CD8-positive, alpha-beta T cell (primary cell): ENCODE measurements at regions of chr1 and their contacts with region 1.

Region 1: GRCh38 chr1:246907472-246907871 is 24.3 kb downstream of the AHCTF1 start:
- DNase-seq: peak in 2 of 9 experiments; percentile 49 to 60
- ATAC-seq: no peak
- H3K4me3 ChIP-seq: no peak overlapping the region
- H3K4me3 Mint-ChIP-seq: no peak overlapping the region
- H3K27ac ChIP-seq: no peak overlapping the region
- H3K27ac Mint-ChIP-seq: no peak overlapping the region
- H3K4me1 ChIP-seq: peaks cover 5% of the 10 kb centered on the region
- H3K4me1 Mint-ChIP-seq: peaks cover 18% of the 10 kb centered on the region
- H3K27me3 ChIP-seq: no peaks in the 10 kb centered on the region
- H3K27me3 Mint-ChIP-seq: no peaks in the 10 kb centered on the region
- CTCF ChIP-seq: peak; percentile 21

Region 2: GRCh38 chr1:246860401-246860800 is 47.1 kb before region 1 on chr1:
- CTCF ChIA-PET with region 1: no interaction called
- POLR2A ChIA-PET with region 1: no interaction called
- intact Hi-C with region 1: no loop called
- DNase-seq: no peak
- ATAC-seq: no peak
- H3K4me3 ChIP-seq: no peak overlapping the region
- H3K4me3 Mint-ChIP-seq: no peak overlapping the region
- H3K27ac ChIP-seq: no peak overlapping the region
- H3K27ac Mint-ChIP-seq: no peak overlapping the region
- H3K4me1 ChIP-seq: no peaks in the 10 kb centered on the region
- H3K4me1 Mint-ChIP-seq: no peaks in the 10 kb centered on the region
- H3K27me3 ChIP-seq: no peaks in the 10 kb centered on the region
- H3K27me3 Mint-ChIP-seq: no peaks in the 10 kb centered on the region
- CTCF ChIP-seq: no peak

Region 3: GRCh38 chr1:246923482-246923881 is 16.0 kb after region 1 on chr1:
- CTCF ChIA-PET with region 1: no interaction called
- POLR2A ChIA-PET with region 1: no interaction called
- intact Hi-C with region 1: no loop called
- DNase-seq: peak in 1 of 9 experiments; percentile 11
- ATAC-seq: no peak
- H3K4me3 ChIP-seq: no peak overlapping the region
- H3K4me3 Mint-ChIP-seq: peak overlapping the region; percentile 24
- H3K27ac ChIP-seq: no peak overlapping the region
- H3K27ac Mint-ChIP-seq: no peak overlapping the region
- H3K4me1 ChIP-seq: peaks cover 19% of the 10 kb centered on the region
- H3K4me1 Mint-ChIP-seq: peaks cover 56% of the 10 kb centered on the region
- H3K27me3 ChIP-seq: no peaks in the 10 kb centered on the region
- H3K27me3 Mint-ChIP-seq: no peaks in the 10 kb centered on the region
- CTCF ChIP-seq: no peak

Region 4: GRCh38 chr1:246971090-246971721 is 63.7 kb after region 1 on chr1:
- CTCF ChIA-PET with region 1: interaction called, 3 read pairs
- POLR2A ChIA-PET with region 1: no interaction called
- intact Hi-C with region 1: loop called (anchors 2 to 5 kb)
- DNase-seq: peak in 8 of 9 experiments; percentile 20 to 58 (median 38)
- ATAC-seq: no peak
- H3K4me3 ChIP-seq: no peak overlapping the region
- H3K4me3 Mint-ChIP-seq: no peak overlapping the region
- H3K27ac ChIP-seq: no peak overlapping the region
- H3K27ac Mint-ChIP-seq: no peak overlapping the region
- H3K4me1 ChIP-seq: no peaks in the 10 kb centered on the region
- H3K4me1 Mint-ChIP-seq: no peaks in the 10 kb centered on the region
- H3K27me3 ChIP-seq: no peaks in the 10 kb centered on the region
- H3K27me3 Mint-ChIP-seq: no peaks in the 10 kb centered on the region
- CTCF ChIP-seq: peak; percentile 67

Region 5: DNA sequence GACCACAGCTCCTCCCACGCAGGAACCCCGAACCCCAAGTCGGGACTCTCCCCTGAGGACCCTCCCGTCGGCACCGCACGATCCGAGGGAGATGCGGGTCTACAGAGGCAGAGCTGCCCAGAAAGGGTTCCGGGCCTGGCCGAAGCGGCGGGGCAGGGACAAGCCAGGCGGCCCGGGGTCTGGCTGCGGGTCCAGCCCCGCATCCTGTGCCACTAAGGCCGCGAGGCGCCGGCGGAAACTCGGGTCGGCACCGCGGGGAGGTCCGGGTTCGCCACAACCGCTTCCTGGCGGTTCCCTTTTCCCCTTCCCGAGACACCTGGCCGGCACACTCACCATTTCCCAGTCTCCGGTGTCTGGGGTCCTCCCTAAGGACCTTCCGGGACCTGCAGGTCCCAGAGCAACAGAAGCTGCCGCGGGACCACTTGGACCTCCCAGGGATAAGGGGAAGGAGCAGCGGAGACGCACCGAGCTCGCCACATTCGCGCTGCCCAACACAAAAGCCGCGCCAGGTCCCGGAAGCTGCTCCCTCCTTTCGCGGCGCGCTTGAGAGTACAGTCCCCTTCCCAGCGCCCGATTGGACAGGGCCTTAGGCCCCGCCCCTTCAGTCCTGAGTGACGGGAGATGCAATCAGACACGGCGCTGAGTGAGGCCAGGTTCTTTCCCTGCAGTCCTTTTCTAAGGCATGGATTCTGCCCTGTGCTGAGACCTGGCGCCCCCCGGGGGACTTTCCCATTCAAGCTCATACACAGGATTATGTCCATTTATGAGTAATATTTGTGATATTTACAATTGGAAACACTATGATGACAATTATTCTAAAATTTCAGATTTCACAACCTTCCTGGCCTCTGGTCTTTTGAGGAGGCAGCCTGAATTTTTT is 171.0 kb after region 1 on chr1 and contains the start of gene ZNF670:
- CTCF ChIA-PET with region 1: no interaction called
- POLR2A ChIA-PET with region 1: no interaction called
- intact Hi-C with region 1: loop called in 1 of 2 experiments (anchors 10 kb)
- DNase-seq: peak; percentile 57 to 91 (median 82)
- ATAC-seq: peak; percentile 99
- H3K4me3 ChIP-seq: peak within 1 kb of the TSS; percentile 80 to 95
- H3K4me3 Mint-ChIP-seq: peak within 1 kb of the TSS; percentile 89
- H3K27ac ChIP-seq: peak within 1 kb of the TSS; percentile 37 to 51
- H3K27ac Mint-ChIP-seq: peak within 1 kb of the TSS; percentile 78
- H3K4me1 ChIP-seq: peaks cover 7% of the 10 kb centered on the region
- H3K4me1 Mint-ChIP-seq: peaks cover 34% of the 10 kb centered on the region
- H3K27me3 ChIP-seq: no peaks in the 10 kb centered on the region
- H3K27me3 Mint-ChIP-seq: no peaks in the 10 kb centered on the region
- CTCF ChIP-seq: no peak
- total RNA-seq, gene ZNF670: 0.17 TPM in 1 of 2 experiments, not detected in the other

Region 6: DNA sequence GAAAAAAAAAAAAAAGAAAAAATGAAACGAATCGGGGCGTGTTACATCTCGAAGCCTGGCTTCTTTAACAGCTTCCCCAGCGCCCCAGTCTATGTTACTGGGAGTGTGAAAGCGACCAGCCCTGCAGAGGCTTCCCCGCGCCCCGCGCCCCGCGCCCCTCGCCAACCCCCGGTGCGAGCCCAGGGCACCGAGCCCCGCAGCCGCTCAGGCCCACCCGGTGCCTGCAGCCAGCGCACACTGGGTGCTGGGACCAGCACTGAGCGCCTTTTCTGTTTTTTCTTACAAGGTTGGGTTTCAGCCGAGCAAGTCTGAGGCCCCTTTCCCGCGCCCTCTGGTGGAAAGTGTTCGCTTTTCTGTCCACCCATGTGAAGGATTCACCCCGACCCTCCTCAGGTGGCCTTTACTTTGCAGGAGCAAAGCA is 466.3 kb after region 1 on chr1:
- CTCF ChIA-PET with region 1: interaction called, 14 read pairs
- POLR2A ChIA-PET with region 1: no interaction called
- intact Hi-C with region 1: loop called in 1 of 2 experiments (anchors 5 kb)
- DNase-seq: peak; percentile 9 to 74 (median 65)
- ATAC-seq: peak; percentile 86
- H3K4me3 ChIP-seq: peak overlapping the region in 1 of 2 experiments; percentile 37
- H3K4me3 Mint-ChIP-seq: peak overlapping the region; percentile 56
- H3K27ac ChIP-seq: no peak overlapping the region
- H3K27ac Mint-ChIP-seq: no peak overlapping the region
- H3K4me1 ChIP-seq: no peaks in the 10 kb centered on the region
- H3K4me1 Mint-ChIP-seq: peaks cover 6% of the 10 kb centered on the region
- H3K27me3 ChIP-seq: no peaks in the 10 kb centered on the region
- H3K27me3 Mint-ChIP-seq: peaks cover 2% of the 10 kb centered on the region
- CTCF ChIP-seq: peak; percentile 48

Region 7: DNA sequence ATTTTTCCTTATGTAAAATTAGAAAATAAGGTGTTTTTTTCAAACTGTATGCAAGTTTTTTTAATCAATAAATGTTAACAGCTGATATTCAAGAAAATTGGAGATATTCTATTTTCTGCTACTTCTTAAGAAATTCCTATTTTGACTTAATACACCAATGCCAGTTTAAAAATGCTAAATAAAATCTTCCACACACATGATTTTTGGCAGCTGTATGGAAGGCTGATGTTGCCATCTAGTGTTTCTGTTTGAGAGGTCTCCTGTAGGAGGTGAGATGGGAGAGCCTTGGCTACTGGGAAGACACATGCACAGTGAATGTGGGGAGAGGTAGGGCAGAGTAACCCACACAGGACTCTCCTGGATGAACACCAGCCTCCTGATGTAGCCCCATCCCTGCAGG is 579.6 kb after region 1 on chr1:
- CTCF ChIA-PET with region 1: no interaction called
- POLR2A ChIA-PET with region 1: no interaction called
- intact Hi-C with region 1: loop called in 1 of 2 experiments (anchors 5 kb)
- DNase-seq: peak in 7 of 9 experiments; percentile 6 to 71 (median 34)
- ATAC-seq: peak; percentile 65
- H3K4me3 ChIP-seq: no peak overlapping the region
- H3K4me3 Mint-ChIP-seq: no peak overlapping the region
- H3K27ac ChIP-seq: no peak overlapping the region
- H3K27ac Mint-ChIP-seq: no peak overlapping the region
- H3K4me1 ChIP-seq: no peaks in the 10 kb centered on the region
- H3K4me1 Mint-ChIP-seq: no peaks in the 10 kb centered on the region
- H3K27me3 ChIP-seq: no peaks in the 10 kb centered on the region
- H3K27me3 Mint-ChIP-seq: peaks cover 3% of the 10 kb centered on the region
- CTCF ChIP-seq: peak; percentile 78